Tibial artery (tissue), 4 donors: ENCODE measurements at regions of chr16 and their contacts with region 1.

Region 1: GRCh38 chr16:30378236-30379204 is 3.8 kb downstream of the SEPTIN1 start:
- DNase-seq: peak; percentile 98 to 100
- H3K4me3 ChIP-seq: peak overlapping the region; percentile 70 to 91
- H3K27ac ChIP-seq: peak overlapping the region; percentile 99 to 100
- H3K4me1 ChIP-seq: peaks cover 0 to 26% (median 15%) of the 10 kb centered on the region in 4 donors
- H3K27me3 ChIP-seq: no peaks in the 10 kb centered on the region
- CTCF ChIP-seq: no peak

Region 2: GRCh38 chr16:29645694-29646187 is 732.8 kb before region 1 on chr16:
- intact Hi-C with region 1: no loop called
- DNase-seq: no peak
- H3K4me3 ChIP-seq: no peak overlapping the region
- H3K27ac ChIP-seq: no peak overlapping the region
- H3K4me1 ChIP-seq: no peaks in the 10 kb centered on the region
- H3K27me3 ChIP-seq: no peaks in the 10 kb centered on the region
- CTCF ChIP-seq: no peak

Region 3: DNA sequence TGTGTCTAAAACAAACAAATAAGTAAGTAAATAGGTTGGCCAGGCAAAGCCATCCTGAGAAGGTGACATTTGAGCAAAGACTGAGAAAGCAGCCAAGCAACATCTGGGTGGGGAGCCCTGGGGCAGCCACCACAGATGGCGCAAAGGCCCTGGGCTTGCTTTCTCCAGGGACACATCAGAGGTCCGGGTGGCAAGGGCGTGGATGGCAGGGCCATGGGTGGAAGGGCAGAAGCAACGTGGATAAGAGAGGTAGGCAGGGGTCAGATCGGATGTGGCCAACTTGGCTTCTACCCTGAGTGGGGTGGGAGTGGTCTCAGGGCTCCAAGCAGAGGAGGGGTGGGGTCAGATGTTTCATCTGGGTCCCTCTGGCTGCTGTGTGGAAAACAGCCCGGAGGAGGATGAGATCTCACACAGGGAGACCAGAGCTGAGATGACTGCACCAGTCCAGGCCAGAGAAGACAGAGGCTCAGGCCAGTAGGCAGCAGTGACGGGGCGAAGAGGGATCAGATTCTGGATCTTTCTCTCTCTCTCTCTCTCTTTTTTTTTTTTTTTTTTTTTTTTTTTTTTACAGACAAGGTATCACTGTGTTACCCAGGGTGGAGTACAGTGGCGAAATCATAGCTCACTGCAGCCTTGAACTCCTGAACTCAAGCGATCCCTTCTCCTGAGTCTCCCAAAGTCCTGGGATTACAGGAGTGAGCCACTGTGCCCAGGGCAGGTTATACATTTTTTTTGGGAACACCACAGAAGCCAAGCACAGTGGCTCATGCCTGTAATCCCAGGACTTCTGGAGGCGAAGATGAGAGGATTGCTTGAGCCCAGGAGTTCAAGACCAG is 721.6 kb before region 1 on chr16:
- intact Hi-C with region 1: no loop called
- DNase-seq: no peak
- H3K4me3 ChIP-seq: no peak overlapping the region
- H3K27ac ChIP-seq: no peak overlapping the region
- H3K4me1 ChIP-seq: no peaks in the 10 kb centered on the region
- H3K27me3 ChIP-seq: no peaks in the 10 kb centered on the region
- CTCF ChIP-seq: no peak

Region 4: DNA sequence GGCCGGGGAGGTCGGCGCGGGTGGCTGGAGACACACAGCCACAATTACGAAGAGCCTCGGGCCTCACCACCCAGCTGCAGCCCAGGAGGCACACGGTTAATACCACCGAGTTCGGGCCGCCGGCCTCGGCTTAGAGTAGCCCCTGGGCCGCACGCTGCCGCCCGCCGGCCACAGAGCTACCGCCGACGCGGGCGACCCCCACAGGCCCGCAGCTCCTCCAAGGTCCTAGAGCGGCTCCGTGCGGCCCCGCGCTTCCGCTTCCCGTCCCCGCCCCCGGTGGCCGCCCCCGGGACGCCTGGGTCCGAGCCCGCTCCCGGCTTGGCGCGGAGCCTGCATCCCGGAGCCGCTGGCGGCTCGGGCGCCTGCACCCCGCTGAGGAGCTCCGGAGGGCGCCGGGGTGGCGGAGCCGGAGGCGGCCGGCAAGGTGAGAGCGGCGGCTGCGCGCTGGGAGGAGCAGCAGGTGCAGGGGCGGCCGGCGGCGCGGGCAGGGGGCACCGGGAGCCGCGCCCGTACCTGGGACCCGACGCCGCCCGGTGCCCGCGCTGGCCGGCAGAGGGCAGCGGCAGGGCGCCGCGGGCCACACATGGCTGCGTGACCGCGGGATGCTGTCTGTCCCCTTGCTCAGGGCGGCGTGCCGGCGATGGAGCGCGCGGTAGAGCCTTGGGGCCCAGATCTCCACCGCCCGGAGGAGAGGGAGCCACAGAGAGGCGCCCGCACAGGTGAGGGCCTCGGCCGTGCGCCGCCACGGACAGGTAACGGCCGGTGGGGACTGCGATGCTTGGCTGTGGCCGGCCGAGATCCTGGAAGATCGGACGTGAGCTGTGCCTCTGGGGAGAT is 16.9 kb after region 1 on chr16 and contains the start of gene ZNF48:
- intact Hi-C with region 1: loop called (anchors 2 kb)
- DNase-seq: peak; percentile 82 to 92
- H3K4me3 ChIP-seq: peak within 1 kb of the TSS; percentile 69 to 81
- H3K27ac ChIP-seq: peak within 1 kb of the TSS; percentile 79 to 83
- H3K4me1 ChIP-seq: peaks cover 0 to 27% (median 23%) of the 10 kb centered on the region in 4 donors
- H3K27me3 ChIP-seq: no peaks in the 10 kb centered on the region
- CTCF ChIP-seq: peak; percentile 5 to 58

Region 5: GRCh38 chr16:30458561-30459394 is 80.3 kb after region 1 on chr16:
- intact Hi-C with region 1: no loop called
- DNase-seq: no peak
- H3K4me3 ChIP-seq: no peak overlapping the region
- H3K27ac ChIP-seq: no peak overlapping the region
- H3K4me1 ChIP-seq: no peaks in the 10 kb centered on the region
- H3K27me3 ChIP-seq: peaks cover 0 to 9% of the 10 kb centered on the region in 2 donors
- CTCF ChIP-seq: no peak